Breast epithelium (tissue), 4 donors: ENCODE measurements at regions of chr21 and their contacts with region 1.

Region 1: DNA sequence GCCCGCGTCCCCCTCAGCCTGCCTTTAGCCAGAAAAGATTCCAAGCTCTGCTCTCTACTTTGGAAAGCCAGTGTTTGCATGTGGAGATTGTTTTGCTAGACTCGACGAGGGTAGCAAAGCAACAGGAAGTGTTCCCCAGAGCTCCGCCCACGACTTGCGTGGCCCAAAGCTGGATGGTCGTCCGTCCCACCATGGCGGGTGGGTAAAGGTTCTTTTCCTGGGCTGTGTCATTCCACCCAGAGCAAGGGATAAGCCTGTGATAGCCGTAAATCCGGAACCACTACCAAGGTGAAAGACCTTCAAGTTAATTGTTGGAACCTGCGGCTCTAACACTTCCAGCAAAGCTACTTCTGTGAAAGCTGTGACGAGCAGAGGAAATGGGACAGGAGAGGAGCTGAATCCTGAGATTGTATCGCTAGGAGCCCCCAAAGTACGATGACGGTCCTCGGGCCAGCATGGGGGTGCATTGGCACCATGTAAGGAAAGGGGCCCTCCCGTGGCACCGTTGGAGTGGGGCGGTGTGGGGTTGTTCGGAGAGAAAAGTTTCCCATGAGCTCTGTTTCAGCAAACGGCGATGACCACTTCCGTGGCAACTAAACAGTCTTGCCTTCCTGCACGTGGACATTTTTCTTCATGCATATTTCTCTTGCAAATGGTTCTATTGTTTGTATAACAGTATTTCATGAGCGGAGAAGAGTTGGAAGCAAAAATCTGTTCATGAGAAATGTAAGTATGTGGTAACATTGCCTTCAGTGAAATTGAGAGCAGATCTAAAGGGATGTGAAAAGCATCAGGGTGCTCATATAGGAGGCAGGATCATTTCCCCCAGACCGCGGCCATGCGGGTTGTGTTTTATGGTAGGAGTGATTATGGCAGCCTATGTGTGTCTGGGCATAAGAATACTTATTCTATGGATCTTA is 8.4 kb downstream of the MX2 start:
- DNase-seq: no peak
- H3K4me3 ChIP-seq: peak overlapping the region; percentile 34 to 65 (median 37)
- H3K27ac ChIP-seq: peak overlapping the region in 1 of 2 donors; percentile 86
- H3K4me1 ChIP-seq: no peaks in the 10 kb centered on the region
- H3K27me3 ChIP-seq: no peaks in the 10 kb centered on the region
- CTCF ChIP-seq: no peak
- POLR2A ChIP-seq: no peak

Region 2: DNA sequence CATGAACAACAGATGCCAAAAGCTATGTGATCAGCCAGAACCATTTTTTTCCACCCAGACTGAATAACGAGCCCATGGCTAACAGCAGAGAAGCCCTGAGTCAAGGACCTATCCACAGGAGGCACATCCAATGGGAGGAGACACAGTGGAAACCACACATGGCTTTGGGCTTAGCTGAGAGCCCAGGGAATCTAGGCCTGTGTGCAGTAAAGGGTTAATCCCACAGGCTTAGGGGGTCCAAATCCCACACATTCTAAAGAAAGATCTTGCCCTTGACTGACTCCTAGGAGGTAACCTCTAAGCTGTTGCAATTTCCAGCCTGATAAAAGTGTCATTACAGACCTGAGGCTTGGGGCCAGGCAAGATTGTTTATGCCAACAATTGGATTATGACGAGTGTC is 717.7 kb before region 1 on chr21:
- intact Hi-C with region 1: loop called (anchors 5 kb)
- DNase-seq: no peak
- H3K4me3 ChIP-seq: no peak overlapping the region
- H3K27ac ChIP-seq: no peak overlapping the region
- H3K4me1 ChIP-seq: no peaks in the 10 kb centered on the region
- H3K27me3 ChIP-seq: no peaks in the 10 kb centered on the region
- CTCF ChIP-seq: no peak
- POLR2A ChIP-seq: no peak

Region 3: GRCh38 chr21:41411449-41412089 is 41.4 kb after region 1 on chr21:
- intact Hi-C with region 1: no loop called
- DNase-seq: no peak
- H3K4me3 ChIP-seq: no peak overlapping the region
- H3K27ac ChIP-seq: peak overlapping the region in 1 of 2 donors; percentile 56
- H3K4me1 ChIP-seq: no peaks in the 10 kb centered on the region
- H3K27me3 ChIP-seq: no peaks in the 10 kb centered on the region
- CTCF ChIP-seq: peak in 1 of 3 donors; percentile 21
- POLR2A ChIP-seq: no peak